Activated naive CD4-positive, alpha-beta T cell treated with anti-CD3 and anti-CD28 coated beads, Interleukin-2, amount 10 ng/mL, durations not matched to agents 7 days and 5 days (primary cell): ENCODE measurements at regions of chr1 and their contacts with region 1.

Region 1: GRCh38 chr1:209692745-209693504 is 11.7 kb upstream of the HSD11B1 start:
- DNase-seq: peak; percentile 81
- H3K4me3 Mint-ChIP-seq: no peak overlapping the region
- H3K27ac Mint-ChIP-seq: no peak overlapping the region
- H3K4me1 Mint-ChIP-seq: peaks cover 60% of the 10 kb centered on the region
- H3K27me3 Mint-ChIP-seq: peaks cover 10% of the 10 kb centered on the region

Region 2: GRCh38 chr1:209576798-209577197 is 116.1 kb before region 1 on chr1:
- CTCF ChIA-PET with region 1: interaction called, 13 read pairs
- DNase-seq: peak; percentile 80
- H3K4me3 Mint-ChIP-seq: no peak overlapping the region
- H3K27ac Mint-ChIP-seq: no peak overlapping the region
- H3K4me1 Mint-ChIP-seq: no peaks in the 10 kb centered on the region
- H3K27me3 Mint-ChIP-seq: peaks cover 39% of the 10 kb centered on the region

Region 3: GRCh38 chr1:209601809-209602657 is 90.9 kb before region 1 on chr1:
- CTCF ChIA-PET with region 1: interaction called, 24 read pairs
- DNase-seq: peak; percentile 58
- H3K4me3 Mint-ChIP-seq: no peak overlapping the region
- H3K27ac Mint-ChIP-seq: no peak overlapping the region
- H3K4me1 Mint-ChIP-seq: peaks cover 4% of the 10 kb centered on the region
- H3K27me3 Mint-ChIP-seq: peaks cover 13% of the 10 kb centered on the region

Region 4: DNA sequence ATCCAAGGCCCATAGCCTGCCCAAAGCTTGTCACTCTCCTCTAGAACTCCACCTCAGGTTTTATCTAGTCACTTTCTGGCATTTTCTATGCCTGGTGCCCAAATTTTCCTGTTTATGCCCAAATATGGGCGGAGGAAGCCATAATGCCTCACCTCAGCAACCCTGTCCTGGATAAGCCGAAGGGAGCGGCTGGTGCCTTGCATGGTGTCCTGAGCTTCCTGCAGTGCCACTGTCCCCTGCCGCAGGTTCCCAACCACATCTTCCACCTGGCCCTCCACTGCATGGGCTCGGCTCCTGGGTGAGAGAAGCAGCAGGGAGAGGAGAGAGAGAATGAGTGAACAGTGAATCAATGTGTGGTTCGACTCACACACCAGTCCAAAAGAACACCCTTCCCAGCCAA is 75.2 kb before region 1 on chr1:
- CTCF ChIA-PET with region 1: no interaction called
- DNase-seq: no peak
- H3K4me3 Mint-ChIP-seq: no peak overlapping the region
- H3K27ac Mint-ChIP-seq: no peak overlapping the region
- H3K4me1 Mint-ChIP-seq: peaks cover 20% of the 10 kb centered on the region
- H3K27me3 Mint-ChIP-seq: peaks cover 22% of the 10 kb centered on the region

Region 5: DNA sequence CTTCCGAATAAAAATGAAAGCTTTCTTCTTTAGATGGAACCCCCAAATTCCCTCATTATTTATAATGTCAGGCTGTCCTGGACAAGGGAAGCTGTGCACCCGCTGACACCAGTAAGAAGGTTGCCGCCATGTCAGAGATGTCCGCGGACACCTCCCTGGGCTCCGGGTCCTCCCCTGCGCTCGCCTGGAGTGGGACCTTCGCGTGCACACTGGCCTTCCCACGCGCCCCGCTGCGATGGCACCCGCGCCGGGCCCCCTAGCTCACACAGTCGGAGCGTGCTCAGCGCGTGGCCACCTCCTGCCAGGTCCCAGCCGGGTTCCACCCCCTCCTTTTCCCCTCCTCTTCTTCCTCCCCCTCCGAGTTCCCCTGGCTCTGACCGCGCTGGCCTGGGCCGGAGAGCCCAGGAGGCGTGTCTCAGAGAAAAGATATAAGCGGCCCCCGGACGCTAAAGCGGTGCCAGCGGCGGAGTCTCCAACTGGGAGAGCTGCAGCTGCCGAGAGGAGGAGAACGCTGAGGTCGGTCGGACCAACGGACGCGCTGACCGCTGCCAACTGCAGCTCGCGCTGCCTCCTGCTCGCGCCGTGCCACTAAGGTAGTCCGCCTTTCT is 17.9 kb before region 1 on chr1 and contains the start of gene G0S2:
- CTCF ChIA-PET with region 1: interaction called, 10 read pairs
- DNase-seq: peak; percentile 45
- H3K4me3 Mint-ChIP-seq: peak within 1 kb of the TSS; percentile 63
- H3K27ac Mint-ChIP-seq: no peak within 1 kb of the TSS
- H3K4me1 Mint-ChIP-seq: peaks cover 68% of the 10 kb centered on the region
- H3K27me3 Mint-ChIP-seq: peaks cover 53% of the 10 kb centered on the region